ENCODE measurements at regions of chr11 and their contacts with region 1.

Region 1: DNA sequence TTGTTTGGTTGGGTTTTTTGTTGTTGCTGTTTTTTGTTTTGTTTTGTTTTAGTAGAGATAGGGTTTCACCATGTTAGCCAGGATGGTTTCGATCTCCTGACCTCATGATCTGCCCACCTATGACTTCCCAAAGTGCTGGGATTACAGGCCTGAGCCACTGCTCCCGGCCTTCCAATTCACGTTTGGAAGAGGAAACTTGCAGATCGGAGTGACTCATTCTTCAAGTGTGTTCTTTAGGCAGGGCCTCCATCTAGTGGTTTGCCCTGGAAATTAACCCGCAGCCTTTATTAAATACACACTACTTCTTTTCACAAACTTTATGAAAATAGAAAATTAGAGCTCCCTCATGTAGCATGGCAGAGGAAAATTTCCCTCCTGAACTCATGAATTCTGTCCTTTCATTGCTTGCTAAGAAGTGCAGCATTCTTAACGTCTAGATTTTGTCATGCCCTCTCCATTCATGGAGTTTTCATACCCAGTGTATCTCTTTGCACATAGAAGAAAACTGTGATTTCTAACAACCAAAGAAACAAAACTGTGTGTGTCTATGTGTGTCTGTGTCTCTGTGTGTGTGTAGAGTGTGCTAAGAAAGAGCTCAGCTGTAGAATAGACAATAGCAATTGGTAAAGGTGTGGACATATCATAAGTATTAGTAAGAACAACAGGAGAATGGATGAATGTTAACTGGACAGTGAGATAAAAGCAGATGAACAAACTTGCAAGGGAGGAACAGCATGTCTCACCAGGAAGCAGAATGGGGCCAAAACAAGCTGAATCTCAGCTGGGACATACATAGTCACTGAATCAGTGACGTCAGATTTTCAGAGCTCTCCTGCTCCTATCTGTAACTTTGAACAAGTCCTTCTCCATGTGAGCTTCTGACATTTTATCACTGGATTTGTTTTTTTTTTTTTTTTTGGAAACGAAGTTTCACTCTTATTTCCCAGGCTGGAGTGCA is 118.4 kb downstream of the BBOX1 start:
- DNase-seq: peak; percentile 51
- CTCF ChIP-seq: peak; percentile 63

Region 2: GRCh38 chr11:26276798-26277424 is 882.1 kb before region 1 on chr11:
- in situ Hi-C with region 1: loop called (anchors 25 kb)
- DNase-seq: peak; percentile 7
- CTCF ChIP-seq: peak; percentile 94

Region 3: DNA sequence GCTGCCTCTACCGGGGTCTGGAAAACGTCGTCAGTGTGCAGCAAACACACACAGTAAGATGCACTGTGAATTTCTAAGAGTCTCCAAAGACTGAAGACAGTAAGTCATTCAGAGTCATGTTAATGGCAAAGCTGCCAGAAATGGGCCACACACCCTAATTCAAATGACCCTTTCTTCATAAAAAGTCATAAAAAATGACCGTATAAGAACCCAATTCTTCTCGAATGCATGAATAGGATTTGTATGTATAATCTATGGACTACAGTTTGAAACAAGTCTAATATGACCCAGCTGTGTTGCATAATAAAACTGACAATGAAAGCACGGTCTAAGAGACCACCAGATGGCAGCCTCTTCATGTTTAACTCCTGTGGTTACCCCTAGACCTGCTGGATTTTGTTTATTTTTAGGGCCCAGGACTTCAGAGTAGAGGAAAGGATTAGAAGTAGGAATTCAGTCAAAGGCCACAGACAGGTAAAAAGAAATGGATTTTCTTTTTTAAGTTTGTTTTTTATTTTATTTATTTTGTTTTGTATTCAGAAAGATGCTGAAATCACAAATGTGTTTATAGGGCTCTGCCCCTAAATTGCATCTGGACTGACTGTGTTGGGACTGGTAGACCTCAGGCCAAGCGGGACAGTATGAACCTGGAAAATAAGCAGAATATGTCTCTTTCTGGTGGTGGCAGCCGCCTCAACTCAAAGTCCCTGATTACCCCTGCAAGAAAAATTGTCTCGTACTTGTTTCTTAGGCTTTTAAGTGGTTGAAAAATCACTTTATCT is 405.1 kb before region 1 on chr11:
- in situ Hi-C with region 1: loop called (anchors 25 kb)
- DNase-seq: no peak
- CTCF ChIP-seq: peak; percentile 56

Region 4: GRCh38 chr11:27209562-27210005 is 50.6 kb after region 1 on chr11:
- in situ Hi-C with region 1: no loop called
- DNase-seq: no peak
- CTCF ChIP-seq: no peak

Measured in GM13977 (cell line).